ENCODE measurements at regions of chr9 and their contacts with region 1.

Region 1: GRCh38 chr9:112379177-112380101 is 469 bp upstream of the HSDL2 start:
- ATAC-seq: peak; percentile 86 to 95 (median 94)
- H3K4me3 ChIP-seq: peak overlapping the region; percentile 62 to 94 (median 78)
- H3K27ac ChIP-seq: peak overlapping the region; percentile 88 to 90
- H3K4me1 ChIP-seq: peaks cover 5 to 17% of the 10 kb centered on the region in 2 donors

Region 2: GRCh38 chr9:112443200-112443599 is 63.8 kb after region 1 on chr9:
- in situ Hi-C with region 1: loop called in 1 of 9 experiments (anchors 10 kb)
- ATAC-seq: no peak
- H3K4me3 ChIP-seq: no peak overlapping the region
- H3K27ac ChIP-seq: no peak overlapping the region
- H3K4me1 ChIP-seq: no peaks in the 10 kb centered on the region